HepG2 (cell line): ENCODE measurements at regions of chr19 and their contacts with region 1.

Region 1: DNA sequence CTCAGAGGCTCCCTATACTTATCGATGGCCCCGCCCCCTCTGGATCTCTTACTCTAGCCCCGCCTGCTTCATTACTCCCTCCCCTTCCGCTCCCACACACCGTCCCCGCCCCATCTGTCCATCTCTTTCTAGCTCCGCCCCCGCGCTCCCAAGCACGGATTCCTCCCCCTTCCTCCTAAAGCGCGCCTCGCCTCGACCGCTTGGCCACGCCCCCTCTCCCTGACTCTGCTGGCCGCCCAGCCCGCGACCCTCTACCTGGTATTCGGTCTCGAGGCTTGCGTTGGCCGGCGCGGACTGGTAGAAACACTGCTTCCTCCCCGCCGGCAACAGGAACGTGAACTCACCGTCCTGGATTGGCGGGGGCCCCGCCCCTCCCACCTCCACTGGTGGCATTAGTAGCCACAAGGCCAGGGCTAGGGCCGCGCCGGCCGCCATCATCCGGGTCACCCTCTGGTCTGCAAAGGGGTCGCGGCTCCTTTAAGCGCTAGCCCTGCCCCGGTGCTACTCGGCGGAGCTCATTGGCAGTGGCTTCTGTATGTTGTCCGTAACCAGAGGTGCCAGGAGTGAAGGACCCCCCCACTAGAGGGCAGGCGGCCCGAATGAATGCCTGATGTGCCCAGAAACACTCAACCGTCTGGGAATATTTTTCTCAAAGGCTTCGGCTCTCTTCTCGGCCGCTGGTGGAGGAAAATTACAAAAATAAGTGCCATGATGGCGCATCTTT is at the start of gene TMED1:
- DNase-seq: peak; percentile 98
- ATAC-seq: peak; percentile 93
- H3K4me3 ChIP-seq: peak within 1 kb of the TSS; percentile 51 to 74 (median 72); a peak in 5 of 6 replicates
- H3K27ac ChIP-seq: peak within 1 kb of the TSS; percentile 93
- H3K4me1 ChIP-seq: peaks cover 40% of the 10 kb centered on the region
- H3K27me3 ChIP-seq: no peaks in the 10 kb centered on the region
- CTCF ChIP-seq: peak; percentile 66
- EP300 ChIP-seq: no peak
- POLR2A ChIP-seq: peak; percentile 60 to 63; a peak in 3 of 4 replicates
- RAD21 ChIP-seq: peak; percentile 59
- total RNA-seq, gene TMED1: 26.4 and 51.8 TPM in 2 replicates

Region 2: GRCh38 chr19:10748924-10749434 is 86.9 kb before region 1 on chr19:
- CTCF ChIA-PET with region 1: no interaction called
- POLR2A ChIA-PET with region 1: no interaction called
- in situ Hi-C with region 1: no loop called
- intact Hi-C with region 1: no loop called
- DNase-seq: peak; percentile 94
- ATAC-seq: peak; percentile 86
- H3K4me3 ChIP-seq: peak overlapping the region in 2 of 3 experiments; percentile 4 to 60; a peak in 2 of 6 replicates
- H3K27ac ChIP-seq: peak overlapping the region; percentile 80
- H3K4me1 ChIP-seq: peaks cover 91% of the 10 kb centered on the region
- H3K27me3 ChIP-seq: no peaks in the 10 kb centered on the region
- CTCF ChIP-seq: 0 out of 2 replicates have a peak, but pooled peaks have one; percentile 12
- EP300 ChIP-seq: peak in 1 of 2 experiments; percentile 47; a peak in 1 of 4 replicates
- POLR2A ChIP-seq: peak in 1 of 2 experiments; percentile 34; a peak in 1 of 4 replicates
- RAD21 ChIP-seq: no peak

Region 3: DNA sequence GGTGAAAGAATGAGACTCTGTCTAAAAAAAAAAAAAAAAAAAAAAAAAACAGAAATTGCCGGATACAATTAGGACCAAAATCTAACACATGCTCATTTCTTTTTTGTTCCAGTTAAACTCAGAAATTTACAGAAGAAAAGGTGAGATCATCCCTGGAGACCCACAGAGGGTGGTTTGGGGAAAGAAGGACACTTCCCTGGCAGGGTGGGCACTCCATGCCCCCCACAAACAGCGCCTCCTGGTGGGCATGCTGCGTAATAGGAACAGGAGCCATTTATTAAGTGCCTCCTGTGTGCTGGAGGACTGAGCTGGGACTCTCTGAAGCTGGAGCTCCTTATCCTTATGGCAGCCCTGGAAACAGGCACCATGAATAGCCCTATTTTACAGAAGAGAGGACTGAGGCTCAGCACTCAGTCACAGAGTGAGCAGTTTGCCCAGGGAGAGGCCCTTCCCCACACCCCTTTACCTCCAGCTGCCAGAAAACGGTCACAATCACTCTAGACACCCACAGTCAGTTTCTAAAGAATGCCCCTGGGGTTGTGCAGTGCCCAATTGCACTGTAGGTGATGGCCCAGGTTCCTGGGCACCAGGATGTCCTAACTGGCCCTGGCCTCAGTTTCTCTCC is 22.4 kb after region 1 on chr19:
- CTCF ChIA-PET with region 1: interaction called, 3 read pairs
- POLR2A ChIA-PET with region 1: interaction called, 41 read pairs
- in situ Hi-C with region 1: no loop called
- intact Hi-C with region 1: no loop called
- DNase-seq: no peak
- ATAC-seq: peak; percentile 22; the same call in 1 of the 3 replicates
- H3K4me3 ChIP-seq: no peak overlapping the region
- H3K27ac ChIP-seq: no peak overlapping the region
- H3K4me1 ChIP-seq: peaks cover 30% of the 10 kb centered on the region
- H3K27me3 ChIP-seq: no peaks in the 10 kb centered on the region
- CTCF ChIP-seq: peak; percentile 75
- EP300 ChIP-seq: no peak
- POLR2A ChIP-seq: no peak
- RAD21 ChIP-seq: no peak

Region 4: GRCh38 chr19:10864538-10864899 is 28.6 kb after region 1 on chr19:
- CTCF ChIA-PET with region 1: interaction called, 3 read pairs
- POLR2A ChIA-PET with region 1: interaction called, 41 read pairs
- in situ Hi-C with region 1: no loop called
- intact Hi-C with region 1: no loop called
- DNase-seq: peak; percentile 68
- ATAC-seq: peak; percentile 86
- H3K4me3 ChIP-seq: peak overlapping the region in 2 of 3 experiments; percentile 51 to 63; a peak in 5 of 6 replicates
- H3K27ac ChIP-seq: no peak overlapping the region
- H3K4me1 ChIP-seq: peaks cover 50% of the 10 kb centered on the region
- H3K27me3 ChIP-seq: no peaks in the 10 kb centered on the region
- CTCF ChIP-seq: peak; percentile 90
- EP300 ChIP-seq: no peak
- POLR2A ChIP-seq: no peak
- RAD21 ChIP-seq: no peak